ENCODE measurements at regions of chr17 and their contacts with region 1.

Region 1: DNA sequence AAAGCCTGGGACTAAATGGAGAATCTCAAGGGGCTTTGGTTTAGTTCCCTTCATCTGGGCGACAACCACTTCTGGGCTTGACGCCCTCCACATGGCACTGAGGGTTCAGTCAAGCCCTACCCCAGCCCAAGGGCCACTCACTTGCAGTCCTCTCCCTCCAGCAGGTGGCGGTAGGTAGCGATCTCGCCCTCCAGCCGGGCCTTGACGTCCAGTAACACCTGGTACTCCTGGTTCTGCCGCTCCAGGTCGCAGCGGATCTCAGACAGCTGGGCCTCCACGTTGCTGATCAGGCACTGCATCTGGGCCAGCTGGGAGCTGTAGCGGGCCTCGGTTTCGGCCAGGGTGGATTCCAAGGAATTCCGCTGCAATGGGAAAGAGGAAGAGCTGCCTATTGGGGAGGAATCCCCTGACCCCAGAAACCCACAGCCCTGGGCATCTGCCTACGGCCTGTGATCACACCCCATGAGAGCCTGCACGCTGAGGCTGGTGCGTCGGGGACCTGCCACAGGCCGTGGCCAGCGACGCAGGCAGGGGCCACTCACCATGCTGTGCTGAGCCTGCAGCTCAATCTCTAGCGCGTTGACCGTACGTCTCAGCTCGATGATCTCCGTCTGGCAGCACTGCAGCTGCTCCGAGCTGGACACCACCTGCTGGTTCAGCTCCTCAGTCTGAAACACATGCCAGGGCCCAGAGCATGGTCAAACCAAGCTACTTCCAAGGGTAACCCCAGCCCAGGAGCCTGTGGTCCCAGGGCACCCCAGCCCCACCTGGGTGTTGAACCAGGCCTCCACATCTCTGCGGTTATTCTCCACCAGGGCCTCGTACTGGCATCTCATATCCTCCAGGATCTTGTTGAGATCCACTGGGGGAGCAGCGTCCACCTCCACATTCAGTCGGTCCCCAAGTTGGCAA is 2.6 kb downstream of the KRT36 start:
- DNase-seq: peak; percentile 92
- ATAC-seq: peak; percentile 96
- H3K4me3 Mint-ChIP-seq: no peak overlapping the region
- H3K27ac Mint-ChIP-seq: no peak overlapping the region
- H3K4me1 Mint-ChIP-seq: no peaks in the 10 kb centered on the region
- H3K27me3 Mint-ChIP-seq: peaks cover 17% of the 10 kb centered on the region
- CTCF ChIP-seq: peak; percentile 50

Region 2: DNA sequence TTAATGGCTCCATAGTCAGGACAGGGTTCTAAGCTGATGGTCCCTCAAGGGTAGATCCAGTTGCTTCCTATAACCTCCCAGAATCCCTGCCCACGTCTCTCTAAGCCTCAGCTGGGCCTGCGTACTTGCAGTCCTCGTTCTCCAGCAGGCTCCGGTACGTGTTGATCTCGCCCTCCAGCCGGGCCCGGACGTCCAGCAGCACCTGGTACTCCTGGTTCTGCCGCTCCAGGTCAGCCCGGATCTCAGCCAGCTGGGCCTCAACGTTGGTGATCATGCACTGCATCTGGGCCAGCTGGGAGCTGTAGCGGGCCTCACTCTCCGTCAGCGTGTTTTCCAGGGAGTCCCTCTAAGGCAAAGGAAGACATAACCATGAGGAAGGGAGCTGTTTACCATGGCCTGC is 24.4 kb before region 1 on chr17:
- CTCF ChIA-PET with region 1: interaction called, 11 read pairs
- POLR2A ChIA-PET with region 1: no interaction called
- DNase-seq: no peak
- ATAC-seq: no peak
- H3K4me3 Mint-ChIP-seq: no peak overlapping the region
- H3K27ac Mint-ChIP-seq: no peak overlapping the region
- H3K4me1 Mint-ChIP-seq: no peaks in the 10 kb centered on the region
- H3K27me3 Mint-ChIP-seq: peaks cover 5% of the 10 kb centered on the region
- CTCF ChIP-seq: no peak

Region 3: DNA sequence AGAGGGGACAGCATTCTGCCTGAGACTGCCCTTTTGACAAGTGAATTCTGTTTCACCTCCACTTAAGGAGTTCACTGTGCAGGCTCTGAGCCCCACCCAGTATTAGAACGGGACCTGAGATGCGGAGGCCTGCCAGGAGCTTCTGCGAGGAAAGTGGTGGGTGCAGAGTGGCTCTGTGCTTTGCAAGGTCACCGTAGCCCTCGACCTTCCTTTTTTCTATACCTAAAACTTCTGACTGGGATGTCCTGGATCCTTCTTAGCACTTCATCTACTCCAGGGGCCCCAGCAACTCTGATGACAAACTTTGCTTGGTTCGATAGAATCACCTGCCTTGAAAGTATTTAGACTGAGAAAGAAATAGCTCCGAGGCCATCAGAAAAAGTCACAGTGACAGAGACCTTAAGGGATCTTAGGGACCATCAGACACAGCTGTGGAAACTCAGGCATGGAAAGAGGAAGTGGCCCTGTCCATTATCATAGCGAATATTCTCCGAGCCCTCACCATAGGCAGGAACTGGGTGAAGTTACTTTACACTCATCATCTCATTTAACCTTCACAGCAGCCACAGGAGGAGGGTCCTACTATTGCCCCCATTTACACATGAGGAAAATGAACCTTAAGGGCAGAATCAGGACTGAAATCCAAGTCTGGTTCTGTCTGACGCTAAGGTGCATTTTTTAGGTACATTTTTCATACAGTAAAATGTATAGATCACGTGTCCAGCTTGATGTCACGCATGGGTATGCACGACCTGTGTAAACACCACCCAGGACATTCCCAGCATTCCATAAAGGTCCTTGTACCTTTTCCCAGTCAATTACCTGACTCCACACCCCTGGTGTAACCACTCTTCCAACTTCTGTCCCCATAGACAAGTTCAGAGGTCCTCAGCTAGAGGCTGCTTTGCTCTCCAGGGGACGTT is 19.0 kb after region 1 on chr17:
- CTCF ChIA-PET with region 1: interaction called, 16 read pairs
- POLR2A ChIA-PET with region 1: no interaction called
- DNase-seq: no peak
- ATAC-seq: no peak
- H3K4me3 Mint-ChIP-seq: no peak overlapping the region
- H3K27ac Mint-ChIP-seq: no peak overlapping the region
- H3K4me1 Mint-ChIP-seq: peaks cover 19% of the 10 kb centered on the region
- H3K27me3 Mint-ChIP-seq: no peaks in the 10 kb centered on the region; the same call in 1 of the 2 replicates
- CTCF ChIP-seq: no peak

Region 4: GRCh38 chr17:41530062-41531051 is 43.3 kb after region 1 on chr17:
- CTCF ChIA-PET with region 1: interaction called, 12 read pairs
- POLR2A ChIA-PET with region 1: interaction called, 3 read pairs
- DNase-seq: no peak
- ATAC-seq: no peak
- H3K4me3 Mint-ChIP-seq: no peak overlapping the region
- H3K27ac Mint-ChIP-seq: no peak overlapping the region
- H3K4me1 Mint-ChIP-seq: peaks cover 41% of the 10 kb centered on the region
- H3K27me3 Mint-ChIP-seq: peaks cover 6% of the 10 kb centered on the region
- CTCF ChIP-seq: no peak